ENCODE measurements at regions of chr12 and their contacts with region 1.

Region 1: GRCh38 chr12:91382081-91382543 is 199.5 kb upstream of the DCN start:
- DNase-seq: peak; percentile 77 to 84
- ATAC-seq: peak; percentile 68 to 88 (median 78)
- H3K4me3 ChIP-seq: peak overlapping the region; percentile 66
- H3K27ac ChIP-seq: peak overlapping the region; percentile 65
- H3K4me1 ChIP-seq: peaks cover 5% of the 10 kb centered on the region
- H3K27me3 ChIP-seq: no peaks in the 10 kb centered on the region
- CTCF ChIP-seq: peak; percentile 89

Region 2: DNA sequence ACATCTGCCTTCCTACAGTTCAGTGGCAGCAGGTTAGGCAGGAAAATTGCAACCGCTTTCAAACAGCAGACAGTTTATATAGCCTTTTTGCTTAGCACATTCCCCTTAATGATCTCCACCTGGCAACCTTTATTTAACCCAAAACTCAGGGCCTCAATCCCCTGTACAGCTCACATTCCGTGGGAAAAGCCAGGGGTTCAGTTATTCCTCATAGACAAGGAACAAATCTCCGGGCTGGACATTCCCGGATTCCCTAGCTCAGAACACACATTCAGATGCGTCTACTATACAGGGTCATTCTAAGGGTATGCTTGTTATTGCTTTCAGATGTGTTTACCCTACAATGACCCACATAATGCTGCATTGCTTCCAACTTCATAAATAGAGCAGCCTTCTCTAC is 125.7 kb before region 1 on chr12:
- intact Hi-C with region 1: no loop called
- DNase-seq: no peak
- ATAC-seq: no peak
- H3K4me3 ChIP-seq: no peak overlapping the region
- H3K27ac ChIP-seq: no peak overlapping the region
- H3K4me1 ChIP-seq: no peaks in the 10 kb centered on the region
- H3K27me3 ChIP-seq: no peaks in the 10 kb centered on the region
- CTCF ChIP-seq: no peak

Region 3: DNA sequence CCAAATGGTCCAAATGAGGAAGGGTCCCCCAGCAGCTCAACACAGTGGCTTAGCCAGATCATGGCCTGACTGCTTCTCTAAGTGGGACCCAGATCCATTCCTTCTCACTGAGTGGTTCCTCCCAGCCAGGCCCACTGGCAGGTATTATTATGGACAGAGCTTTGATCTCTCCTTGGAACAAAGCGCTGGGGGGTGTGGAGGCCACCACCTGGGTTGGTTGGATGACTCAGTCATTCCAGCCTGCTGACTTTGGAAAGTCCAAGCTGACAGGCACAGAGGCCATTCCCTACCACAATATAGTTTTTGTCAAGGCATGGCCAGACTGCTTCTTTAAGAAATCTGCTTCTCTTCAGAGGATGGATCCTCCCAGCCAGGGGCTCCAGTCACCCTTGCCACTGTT is 422.4 kb after region 1 on chr12:
- intact Hi-C with region 1: loop called in 1 of 2 experiments (anchors 10 kb)
- DNase-seq: no peak
- ATAC-seq: no peak
- H3K4me3 ChIP-seq: no peak overlapping the region
- H3K27ac ChIP-seq: no peak overlapping the region
- H3K4me1 ChIP-seq: no peaks in the 10 kb centered on the region
- H3K27me3 ChIP-seq: no peaks in the 10 kb centered on the region
- CTCF ChIP-seq: no peak